GM18951 (cell line): ENCODE measurements at regions of chr1 and their contacts with region 1.

Region 1: DNA sequence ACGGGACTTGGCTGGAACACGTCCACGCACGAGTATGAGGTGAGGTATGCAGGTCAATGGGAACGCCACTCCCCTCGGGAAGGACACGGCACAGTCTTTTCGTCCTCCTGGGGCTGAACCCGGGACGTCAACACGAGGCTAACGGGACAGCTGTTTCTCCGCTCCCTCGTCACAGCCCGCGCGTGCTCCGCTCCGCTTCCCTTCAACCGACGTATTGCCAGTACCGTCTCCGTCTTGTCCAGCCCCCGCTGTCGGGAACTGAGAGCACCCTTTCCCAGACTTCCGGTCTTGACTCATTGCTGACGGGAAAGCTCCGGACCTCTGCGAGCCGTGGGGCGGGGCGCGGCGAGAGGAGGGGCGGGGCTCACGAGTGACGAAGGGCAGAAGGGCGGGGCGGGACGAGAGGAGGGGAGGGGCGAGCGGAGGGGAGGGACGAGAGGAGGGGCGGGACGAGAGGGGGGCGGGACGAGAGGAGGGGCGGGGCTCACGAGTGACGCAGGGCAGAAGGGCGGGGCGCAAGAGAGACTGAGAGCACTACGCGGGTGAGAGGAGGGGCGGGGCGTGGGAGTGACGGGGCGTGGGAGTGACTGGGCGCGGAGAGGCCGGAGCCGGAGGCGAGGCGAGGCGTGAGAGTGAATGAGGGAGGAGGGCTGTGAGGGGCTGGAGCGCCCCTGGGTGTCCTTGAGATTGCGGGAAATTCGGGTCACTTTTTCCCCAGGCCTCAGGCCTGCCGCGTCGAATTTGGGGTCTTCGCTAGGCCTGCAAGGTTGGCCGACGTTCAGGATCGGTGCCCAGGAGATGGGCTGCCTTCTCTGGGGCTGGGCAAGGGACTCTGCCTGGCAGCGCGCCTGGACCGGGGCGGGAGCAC is 22.2 kb upstream of the CFAP126 start:
- POLR2A ChIP-seq: peak; percentile 70

Region 2: DNA sequence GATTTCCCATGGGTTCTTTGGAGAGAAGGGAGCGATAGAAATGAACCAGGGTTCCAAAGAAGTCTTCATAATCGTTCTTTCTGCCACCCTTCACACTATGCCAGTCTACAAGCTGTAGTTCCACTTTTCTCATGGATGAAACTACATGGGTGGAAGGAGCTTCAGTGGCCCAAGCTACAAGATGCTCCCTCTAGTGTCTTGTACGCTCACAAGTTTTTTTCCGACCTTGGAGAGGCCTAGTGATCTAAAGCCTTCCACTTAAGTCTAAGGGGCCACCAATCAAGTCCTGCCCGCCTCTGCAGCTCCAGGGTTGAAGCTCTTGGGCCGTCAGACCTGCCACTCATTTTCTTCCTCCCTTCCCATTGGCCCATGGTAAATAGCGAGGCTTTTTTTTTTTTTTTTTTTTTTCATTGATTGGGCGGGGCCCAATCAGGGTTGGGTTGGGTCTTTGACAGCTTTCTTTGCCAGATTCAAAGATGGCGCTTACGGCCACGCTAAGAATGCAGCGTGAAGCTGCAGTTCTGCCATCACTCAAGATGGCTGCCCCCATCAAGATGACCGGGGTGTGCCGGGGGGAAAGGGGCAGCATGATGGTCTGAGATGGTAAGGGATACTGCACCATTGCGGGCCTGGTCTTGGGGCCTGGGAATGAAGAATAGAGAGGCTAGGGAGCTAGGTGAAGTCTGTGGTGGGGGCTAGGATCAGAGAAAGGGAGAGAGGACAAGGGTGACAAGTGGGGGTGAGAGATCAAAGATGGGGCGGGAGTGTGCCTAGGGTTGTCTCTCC is 164.2 kb before region 1 on chr1 and contains the start of gene TOMM40L:
- in situ Hi-C with region 1: loop called (anchors 10 kb)
- POLR2A ChIP-seq: peak; percentile 62